Left ventricle myocardium superior (tissue), 1 donor: ENCODE measurements at regions of chrX and their contacts with region 1.

Region 1: GRCh38 chrX:43939187-43939926 is 33.8 kb downstream of the NDP start:
- DNase-seq: no peak
- ATAC-seq: peak; percentile 41

Region 2: GRCh38 chrX:43836435-43837184 is 102.7 kb before region 1 on chrX:
- intact Hi-C with region 1: loop called (anchors 2 kb)
- DNase-seq: no peak
- ATAC-seq: no peak